Right ventricle myocardium inferior (tissue), 1 donor: ENCODE measurements at regions of chr6 and their contacts with region 1.

Region 1: DNA sequence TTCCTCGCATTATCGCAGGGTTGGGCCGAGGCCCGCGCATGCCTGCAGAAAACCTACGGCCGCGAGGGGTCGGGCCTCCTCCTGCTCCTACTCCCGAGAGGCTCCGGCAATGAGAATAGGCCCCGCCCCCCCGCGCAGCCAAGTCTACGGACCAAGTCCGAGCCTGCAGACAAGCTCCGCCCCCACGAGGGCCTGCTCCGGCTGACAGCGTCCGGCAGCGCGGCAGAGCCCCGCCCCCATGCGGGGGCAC is 3.1 kb upstream of the GPSM3 start:
- DNase-seq: peak; percentile 100
- ATAC-seq: peak; percentile 92

Region 2: GRCh38 chr6:32127717-32128592 is 67.6 kb before region 1 on chr6 and contains the start of gene ATF6B:
- intact Hi-C with region 1: loop called (anchors 5 kb)
- DNase-seq: peak; percentile 98
- ATAC-seq: peak; percentile 96
- total RNA-seq, gene ATF6B: 24.4 TPM

Region 3: GRCh38 chr6:32177788-32178546 is 17.6 kb before region 1 on chr6 and contains the start of gene RNF5:
- intact Hi-C with region 1: loop called (anchors 1 kb)
- DNase-seq: peak; percentile 96
- ATAC-seq: peak; percentile 88
- total RNA-seq, gene RNF5: 97.5 TPM

Region 4: DNA sequence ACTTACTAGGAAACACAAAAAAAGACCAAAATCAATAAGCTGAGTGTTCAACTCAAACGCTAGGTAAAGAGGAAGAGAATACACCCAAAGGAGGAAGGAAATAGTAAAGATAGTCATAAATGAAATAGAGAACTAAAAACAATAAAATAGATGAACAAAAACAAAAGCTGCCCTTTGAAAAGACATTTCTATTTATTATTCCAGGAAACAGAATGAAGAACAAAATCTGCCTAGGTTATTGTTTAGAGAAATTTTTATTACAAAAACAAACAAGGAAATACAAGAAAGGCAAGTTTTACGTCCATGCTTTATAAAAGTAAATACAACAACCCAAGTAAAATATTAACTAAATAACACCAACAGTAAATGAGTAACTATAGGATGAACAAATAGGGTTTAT is 725.1 kb after region 1 on chr6:
- intact Hi-C with region 1: no loop called
- DNase-seq: no peak
- ATAC-seq: no peak

Region 5: GRCh38 chr6:33200219-33201146 is 1004.9 kb after region 1 on chr6 and contains the starts of genes RXRB and SLC39A7:
- intact Hi-C with region 1: loop called (anchors 10 kb)
- DNase-seq: peak; percentile 100
- ATAC-seq: peak; percentile 89
- total RNA-seq, gene RXRB: 39.3 TPM
- total RNA-seq, gene SLC39A7: 55.4 TPM